MCF 10A (cell line): ENCODE measurements at regions of chr5 and their contacts with region 1.

Region 1: DNA sequence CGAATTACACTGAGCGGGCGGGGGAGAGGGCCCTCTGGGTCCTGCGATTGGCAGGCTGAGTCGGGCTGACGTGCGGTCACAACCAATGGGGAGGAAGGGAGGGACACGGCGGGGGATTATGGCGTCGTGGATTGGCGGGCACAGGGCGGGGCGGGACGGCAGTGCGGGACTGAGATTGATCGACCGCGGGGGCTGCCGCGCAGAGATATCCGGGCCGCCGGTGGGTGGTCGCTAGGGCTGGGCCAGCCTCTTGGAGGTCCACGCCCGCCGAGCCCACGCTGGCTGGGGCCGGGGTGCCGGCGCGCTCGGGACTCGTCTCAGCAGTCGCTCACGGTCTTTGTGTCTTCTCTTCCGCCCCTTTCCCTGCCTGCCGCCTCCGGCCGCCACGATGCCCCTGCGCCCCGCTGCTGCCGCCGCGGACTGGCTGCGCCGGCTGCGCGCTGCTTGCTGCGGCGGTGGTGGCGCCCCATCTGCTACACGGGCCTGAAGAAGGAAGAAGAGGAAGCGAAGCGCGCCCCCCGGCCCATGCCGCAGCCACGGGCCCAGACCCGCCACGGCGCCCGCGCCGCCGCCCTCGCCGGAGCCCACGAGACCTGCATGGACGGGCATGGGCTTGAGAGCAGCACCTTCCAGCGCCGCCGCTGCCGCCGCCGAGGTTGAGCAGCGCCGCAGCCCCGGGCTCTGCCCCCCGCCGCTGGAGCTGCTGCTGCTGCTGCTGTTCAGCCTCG is at the start of gene RGMB:
- DNase-seq: peak; percentile 98
- H3K4me3 Mint-ChIP-seq: peak within 1 kb of the TSS; percentile 92
- H3K27ac Mint-ChIP-seq: peak within 1 kb of the TSS; percentile 99
- H3K4me1 Mint-ChIP-seq: peaks cover 26% of the 10 kb centered on the region
- H3K27me3 Mint-ChIP-seq: no peaks in the 10 kb centered on the region
- CTCF ChIP-seq: no peak
- total RNA-seq, gene RGMB: 17.5 and 20.3 TPM in 2 replicates

Region 2: GRCh38 chr5:97183100-97183929 is 1590.3 kb before region 1 on chr5 and contains the start of gene RIOK2:
- CTCF ChIA-PET with region 1: interaction called, 10 read pairs
- POLR2A ChIA-PET with region 1: interaction called, 21 read pairs
- intact Hi-C with region 1: loop called (anchors 1 kb)
- DNase-seq: peak; percentile 97
- H3K4me3 Mint-ChIP-seq: peak within 1 kb of the TSS; percentile 77
- H3K27ac Mint-ChIP-seq: peak within 1 kb of the TSS; percentile 100
- H3K4me1 Mint-ChIP-seq: peaks cover 35% of the 10 kb centered on the region
- H3K27me3 Mint-ChIP-seq: no peaks in the 10 kb centered on the region
- CTCF ChIP-seq: no peak
- total RNA-seq, gene RIOK2: 45.7 and 50.9 TPM in 2 replicates

Region 3: GRCh38 chr5:97764700-97765099 is 1008.9 kb before region 1 on chr5:
- CTCF ChIA-PET with region 1: no interaction called
- POLR2A ChIA-PET with region 1: interaction called, 3 read pairs
- intact Hi-C with region 1: loop called (anchors 5 kb)
- DNase-seq: peak; percentile 84
- H3K4me3 Mint-ChIP-seq: no peak overlapping the region
- H3K27ac Mint-ChIP-seq: no peak overlapping the region
- H3K4me1 Mint-ChIP-seq: peaks cover 8% of the 10 kb centered on the region
- H3K27me3 Mint-ChIP-seq: no peaks in the 10 kb centered on the region
- CTCF ChIP-seq: no peak

Region 4: GRCh38 chr5:98309785-98310598 is 463.6 kb before region 1 on chr5:
- CTCF ChIA-PET with region 1: interaction called, 3 read pairs
- POLR2A ChIA-PET with region 1: no interaction called
- intact Hi-C with region 1: loop called (anchors 5 kb)
- DNase-seq: peak; percentile 77
- H3K4me3 Mint-ChIP-seq: peak overlapping the region; percentile 68
- H3K27ac Mint-ChIP-seq: peak overlapping the region; percentile 96
- H3K4me1 Mint-ChIP-seq: peaks cover 32% of the 10 kb centered on the region
- H3K27me3 Mint-ChIP-seq: no peaks in the 10 kb centered on the region
- CTCF ChIP-seq: no peak

Region 5: GRCh38 chr5:98796197-98796972 is 22.8 kb after region 1 on chr5:
- CTCF ChIA-PET with region 1: interaction called, 71 read pairs
- POLR2A ChIA-PET with region 1: interaction called, 14 read pairs
- intact Hi-C with region 1: loop called (anchors 1 kb)
- DNase-seq: peak; percentile 74
- H3K4me3 Mint-ChIP-seq: no peak overlapping the region
- H3K27ac Mint-ChIP-seq: no peak overlapping the region
- H3K4me1 Mint-ChIP-seq: no peaks in the 10 kb centered on the region
- H3K27me3 Mint-ChIP-seq: no peaks in the 10 kb centered on the region
- CTCF ChIP-seq: peak; percentile 73

Region 6: DNA sequence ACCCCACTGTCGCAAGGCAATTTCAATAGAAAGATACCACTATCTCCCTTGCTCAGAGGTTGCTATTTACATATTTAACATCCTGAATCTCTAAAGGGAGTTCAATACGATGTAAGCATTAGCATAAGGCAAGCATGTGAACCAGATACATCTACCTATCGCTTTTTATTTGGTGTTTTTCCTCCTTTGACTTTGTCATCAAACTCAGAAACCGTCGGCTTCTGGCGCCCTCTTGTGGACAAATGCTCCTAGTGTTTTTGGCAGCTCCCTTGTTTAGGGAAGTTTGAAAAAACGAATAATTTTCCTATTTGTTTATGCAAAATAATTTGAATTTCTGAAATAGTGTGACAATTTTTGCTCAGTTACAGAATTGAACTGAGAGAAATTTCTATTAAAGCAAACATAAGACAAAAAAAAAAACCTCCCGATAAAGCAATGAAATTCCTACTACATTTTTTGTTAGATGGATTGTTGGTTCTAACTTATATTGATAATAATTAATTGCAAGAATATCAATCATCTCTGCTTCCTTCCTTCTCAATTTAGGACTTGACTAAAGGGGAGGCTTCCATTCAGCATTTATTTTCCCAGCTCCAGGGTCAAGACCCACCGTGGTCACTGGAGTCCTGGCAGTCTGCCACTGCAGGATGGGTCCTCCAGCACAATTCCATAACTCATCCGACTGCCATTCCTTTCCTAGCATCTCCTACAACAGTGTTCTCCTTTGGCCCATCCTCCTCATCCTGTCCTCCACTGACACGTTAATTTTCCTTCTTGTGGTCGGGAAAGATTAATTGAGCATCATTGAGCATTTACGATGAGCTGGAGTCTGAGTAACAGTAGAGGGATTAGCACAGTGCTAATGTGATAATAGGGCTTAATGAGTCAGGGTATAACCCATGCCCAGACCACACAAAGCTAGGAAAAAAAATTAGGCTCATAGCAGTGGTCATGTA is 287.0 kb after region 1 on chr5:
- CTCF ChIA-PET with region 1: interaction called, 12 read pairs
- POLR2A ChIA-PET with region 1: interaction called, 3 read pairs
- intact Hi-C with region 1: no loop called
- DNase-seq: peak; percentile 83
- H3K4me3 Mint-ChIP-seq: no peak overlapping the region
- H3K27ac Mint-ChIP-seq: no peak overlapping the region
- H3K4me1 Mint-ChIP-seq: peaks cover 20% of the 10 kb centered on the region
- H3K27me3 Mint-ChIP-seq: no peaks in the 10 kb centered on the region
- CTCF ChIP-seq: peak; percentile 83